ENCODE measurements at regions of chr5 and their contacts with region 1.

Region 1: GRCh38 chr5:157761690-157762621 is 18.4 kb downstream of the LSM11 start:
- DNase-seq: peak; percentile 35
- ATAC-seq: peak; percentile 97
- H3K4me3 ChIP-seq: no peak overlapping the region
- H3K27ac ChIP-seq: no peak overlapping the region
- H3K4me1 ChIP-seq: no peaks in the 10 kb centered on the region
- H3K27me3 ChIP-seq: no peaks in the 10 kb centered on the region
- CTCF ChIP-seq: peak; percentile 74 to 79 (median 76)
- POLR2A ChIP-seq: no peak
- RAD21 ChIP-seq: peak; percentile 84

Region 2: GRCh38 chr5:157917899-157918809 is 156.2 kb after region 1 on chr5:
- CTCF ChIA-PET with region 1: no interaction called
- POLR2A ChIA-PET with region 1: no interaction called
- RAD21 ChIA-PET with region 1: no interaction called
- intact Hi-C with region 1: loop called (anchors 10 kb)
- DNase-seq: peak; percentile 66
- ATAC-seq: peak; percentile 100
- H3K4me3 ChIP-seq: no peak overlapping the region
- H3K27ac ChIP-seq: no peak overlapping the region
- H3K4me1 ChIP-seq: 0 out of 4 replicates have a peak, but pooled peaks cover 0 to 3% of the 10 kb centered on the region in 2 experiments
- H3K27me3 ChIP-seq: no peaks in the 10 kb centered on the region
- CTCF ChIP-seq: peak; percentile 70 to 81 (median 73)
- POLR2A ChIP-seq: no peak
- RAD21 ChIP-seq: peak; percentile 71

Region 3: DNA sequence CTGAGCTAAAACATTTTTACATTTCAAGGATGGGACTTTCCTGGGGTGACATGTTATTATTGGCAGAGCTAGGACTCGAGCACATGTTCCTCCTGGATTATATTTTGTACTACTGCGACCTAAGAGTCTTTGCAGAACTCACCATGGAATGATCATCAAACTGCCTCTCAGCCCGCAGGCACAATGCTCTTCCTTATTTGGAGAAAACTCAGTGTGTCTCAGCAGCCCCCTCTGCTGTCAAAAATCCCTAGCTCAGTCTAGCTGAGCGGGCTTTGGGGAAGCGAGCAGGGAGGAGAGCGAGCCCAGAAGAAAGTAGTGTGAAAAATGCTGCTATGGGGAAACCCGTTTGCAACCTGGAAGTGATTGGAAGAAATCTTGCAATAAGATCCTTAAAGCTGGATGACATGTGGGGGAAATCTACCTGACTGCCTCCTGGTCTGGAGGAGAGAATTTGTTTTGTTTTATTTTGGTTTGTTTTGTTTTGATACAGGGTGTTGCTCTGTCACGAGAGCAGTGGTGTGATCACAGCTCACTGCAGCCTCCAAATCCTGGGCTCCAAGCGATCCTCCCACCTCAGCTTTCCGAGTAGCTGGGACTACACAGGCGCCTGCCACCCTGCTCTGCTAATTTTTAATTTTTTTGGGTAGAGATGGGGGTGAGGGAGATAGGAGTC is 186.9 kb after region 1 on chr5:
- CTCF ChIA-PET with region 1: interaction called, 3 read pairs
- POLR2A ChIA-PET with region 1: no interaction called
- RAD21 ChIA-PET with region 1: no interaction called
- intact Hi-C with region 1: loop called (anchors 2 kb)
- DNase-seq: peak; percentile 83
- ATAC-seq: peak; percentile 100
- H3K4me3 ChIP-seq: peak overlapping the region in 1 of 2 experiments; percentile 27; a peak in 1 of 4 replicates
- H3K27ac ChIP-seq: no peak overlapping the region
- H3K4me1 ChIP-seq: peaks cover 0 to 9% of the 10 kb centered on the region in 2 experiments; a peak in 1 of 4 replicates
- H3K27me3 ChIP-seq: no peaks in the 10 kb centered on the region
- CTCF ChIP-seq: peak; percentile 81 to 88 (median 88)
- POLR2A ChIP-seq: no peak
- RAD21 ChIP-seq: peak; percentile 67

Region 4: GRCh38 chr5:157994906-157995519 is 233.1 kb after region 1 on chr5:
- CTCF ChIA-PET with region 1: interaction called, 3 read pairs
- POLR2A ChIA-PET with region 1: no interaction called
- RAD21 ChIA-PET with region 1: no interaction called
- intact Hi-C with region 1: loop called (anchors 2 kb)
- DNase-seq: peak; percentile 46
- ATAC-seq: peak; percentile 99
- H3K4me3 ChIP-seq: no peak overlapping the region
- H3K27ac ChIP-seq: no peak overlapping the region
- H3K4me1 ChIP-seq: no peaks in the 10 kb centered on the region
- H3K27me3 ChIP-seq: no peaks in the 10 kb centered on the region
- CTCF ChIP-seq: peak; percentile 70 to 88 (median 73); a peak in 5 of 6 replicates
- POLR2A ChIP-seq: no peak
- RAD21 ChIP-seq: peak; percentile 79

Region 5: DNA sequence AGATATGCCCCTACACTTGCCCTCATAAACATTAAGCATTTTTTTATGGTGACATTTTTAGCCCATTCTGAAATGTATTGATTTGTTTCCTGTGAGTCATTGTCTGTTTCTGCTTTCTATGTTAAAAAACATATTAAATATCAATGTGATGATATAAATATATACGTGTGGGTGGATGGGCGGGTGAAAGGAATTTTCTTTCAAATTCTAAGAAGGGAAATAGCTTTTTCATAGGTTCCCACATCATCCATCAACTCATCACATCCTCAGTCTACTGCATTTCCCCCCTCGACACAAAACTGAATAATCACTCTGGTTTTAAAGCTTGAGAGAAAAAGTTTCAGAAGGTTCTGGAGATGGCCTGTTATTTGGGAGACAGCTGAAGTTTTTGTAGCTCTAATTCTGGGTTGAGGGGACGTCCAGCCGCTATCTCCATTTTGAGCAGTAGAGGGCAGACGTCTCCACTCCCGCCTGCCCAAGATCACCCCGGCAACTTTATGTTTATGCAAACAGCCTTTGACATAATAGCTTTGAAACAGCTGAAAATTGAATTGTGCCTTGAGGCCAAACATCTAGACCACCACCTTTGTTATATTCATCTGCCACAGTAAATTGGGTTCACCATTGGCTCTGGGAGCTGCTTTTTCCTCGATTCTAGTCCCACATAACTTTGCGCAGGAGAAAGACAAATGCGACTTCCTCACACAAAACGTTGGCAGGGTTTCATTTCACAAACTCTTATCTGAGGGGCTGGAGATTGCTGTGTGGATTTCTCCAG is 313.2 kb after region 1 on chr5:
- CTCF ChIA-PET with region 1: no interaction called
- POLR2A ChIA-PET with region 1: no interaction called
- RAD21 ChIA-PET with region 1: no interaction called
- intact Hi-C with region 1: loop called (anchors 2 kb)
- DNase-seq: peak; percentile 42
- ATAC-seq: peak; percentile 93
- H3K4me3 ChIP-seq: no peak overlapping the region
- H3K27ac ChIP-seq: no peak overlapping the region
- H3K4me1 ChIP-seq: no peaks in the 10 kb centered on the region
- H3K27me3 ChIP-seq: peaks cover 15% of the 10 kb centered on the region
- CTCF ChIP-seq: peak; percentile 37 to 80 (median 78); a peak in 5 of 6 replicates
- POLR2A ChIP-seq: no peak
- RAD21 ChIP-seq: peak; percentile 65

Region 6: DNA sequence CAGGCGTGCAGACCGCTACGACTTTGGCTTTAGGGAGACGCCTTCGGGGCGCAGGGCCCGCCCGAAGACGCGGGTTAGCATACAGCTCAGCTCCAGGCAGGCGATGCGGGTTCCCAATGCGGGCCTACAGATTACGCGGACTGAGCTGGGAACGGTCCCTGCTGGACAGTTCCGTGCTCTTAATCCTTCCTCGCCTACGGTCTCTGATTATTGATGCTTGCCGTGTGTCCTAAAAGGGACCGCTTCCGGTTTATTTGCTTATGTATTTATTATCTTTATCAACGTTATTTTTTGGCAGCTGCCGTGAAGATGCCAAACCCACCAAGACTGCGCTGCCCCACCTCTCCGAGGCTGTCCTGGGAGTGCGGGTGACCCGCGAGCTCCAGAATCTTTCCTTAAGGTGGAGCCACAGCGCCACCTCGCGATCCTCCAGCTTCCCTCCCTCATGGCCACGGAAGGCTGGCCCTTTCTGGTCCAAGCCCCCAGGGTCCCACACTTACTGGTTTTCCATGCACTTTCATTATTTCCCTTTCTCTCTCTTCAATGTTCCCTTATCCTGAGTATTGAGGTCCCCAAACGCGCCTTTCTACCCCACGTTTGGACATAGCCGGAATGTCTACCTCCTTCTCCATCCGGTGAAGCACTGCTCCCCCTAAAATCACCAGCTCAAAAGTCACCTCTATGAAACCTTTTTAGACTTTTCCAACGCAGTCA is 1344.8 kb after region 1 on chr5:
- CTCF ChIA-PET with region 1: no interaction called
- POLR2A ChIA-PET with region 1: no interaction called
- RAD21 ChIA-PET with region 1: no interaction called
- intact Hi-C with region 1: loop called (anchors 5 kb)
- DNase-seq: peak; percentile 33
- ATAC-seq: peak; percentile 98
- H3K4me3 ChIP-seq: no peak overlapping the region
- H3K27ac ChIP-seq: no peak overlapping the region
- H3K4me1 ChIP-seq: no peaks in the 10 kb centered on the region
- H3K27me3 ChIP-seq: peaks cover 54% of the 10 kb centered on the region
- CTCF ChIP-seq: peak; percentile 72 to 94 (median 84)
- POLR2A ChIP-seq: no peak
- RAD21 ChIP-seq: peak; percentile 90

Region 7: GRCh38 chr5:159133041-159133741 is 1371.2 kb after region 1 on chr5:
- CTCF ChIA-PET with region 1: no interaction called
- POLR2A ChIA-PET with region 1: no interaction called
- RAD21 ChIA-PET with region 1: no interaction called
- intact Hi-C with region 1: loop called (anchors 10 kb)
- DNase-seq: peak; percentile 44
- ATAC-seq: peak; percentile 77
- H3K4me3 ChIP-seq: no peak overlapping the region
- H3K27ac ChIP-seq: no peak overlapping the region
- H3K4me1 ChIP-seq: no peaks in the 10 kb centered on the region
- H3K27me3 ChIP-seq: peaks cover 46% of the 10 kb centered on the region
- CTCF ChIP-seq: peak; percentile 53 to 79 (median 66); a peak in 5 of 6 replicates
- POLR2A ChIP-seq: no peak
- RAD21 ChIP-seq: peak; percentile 90